Endothelial cell of umbilical vein (primary cell): ENCODE measurements at regions of chr2 and their contacts with region 1.

Region 1: GRCh38 chr2:11446733-11447248 is 19.2 kb downstream of the E2F6 start:
- DNase-seq: peak; percentile 71
- H3K4me3 ChIP-seq: no peak overlapping the region
- H3K27ac ChIP-seq: no peak overlapping the region
- H3K4me1 ChIP-seq: no peaks in the 10 kb centered on the region
- H3K27me3 ChIP-seq: no peaks in the 10 kb centered on the region
- CTCF ChIP-seq: peak; percentile 72 to 75
- POLR2A ChIP-seq: no peak

Region 2: DNA sequence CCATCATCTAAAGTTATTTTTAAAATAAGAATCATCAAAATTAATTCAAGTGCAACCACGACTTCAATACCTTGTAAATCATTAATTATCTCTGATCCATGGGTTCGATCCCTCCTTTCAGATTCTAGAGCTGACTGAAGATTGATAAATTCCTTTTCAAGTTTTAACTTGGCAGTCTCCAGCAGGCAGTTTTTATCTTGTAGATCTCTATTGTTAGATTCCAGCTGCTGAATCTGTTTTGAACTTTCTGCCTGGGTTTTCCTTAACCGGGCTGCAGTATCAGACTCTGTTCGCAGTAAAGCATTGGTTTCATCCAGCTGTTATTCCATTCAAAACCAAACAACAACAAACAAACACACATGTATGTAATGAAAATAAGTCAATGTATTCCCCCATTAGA is 232.0 kb before region 1 on chr2:
- CTCF ChIA-PET with region 1: interaction called, 10 read pairs
- POLR2A ChIA-PET with region 1: no interaction called
- dilution Hi-C with region 1: no loop called
- intact Hi-C with region 1: no loop called
- DNase-seq: no peak
- H3K4me3 ChIP-seq: no peak overlapping the region
- H3K27ac ChIP-seq: no peak overlapping the region
- H3K4me1 ChIP-seq: no peaks in the 10 kb centered on the region
- H3K27me3 ChIP-seq: no peaks in the 10 kb centered on the region
- CTCF ChIP-seq: no peak
- POLR2A ChIP-seq: no peak

Region 3: DNA sequence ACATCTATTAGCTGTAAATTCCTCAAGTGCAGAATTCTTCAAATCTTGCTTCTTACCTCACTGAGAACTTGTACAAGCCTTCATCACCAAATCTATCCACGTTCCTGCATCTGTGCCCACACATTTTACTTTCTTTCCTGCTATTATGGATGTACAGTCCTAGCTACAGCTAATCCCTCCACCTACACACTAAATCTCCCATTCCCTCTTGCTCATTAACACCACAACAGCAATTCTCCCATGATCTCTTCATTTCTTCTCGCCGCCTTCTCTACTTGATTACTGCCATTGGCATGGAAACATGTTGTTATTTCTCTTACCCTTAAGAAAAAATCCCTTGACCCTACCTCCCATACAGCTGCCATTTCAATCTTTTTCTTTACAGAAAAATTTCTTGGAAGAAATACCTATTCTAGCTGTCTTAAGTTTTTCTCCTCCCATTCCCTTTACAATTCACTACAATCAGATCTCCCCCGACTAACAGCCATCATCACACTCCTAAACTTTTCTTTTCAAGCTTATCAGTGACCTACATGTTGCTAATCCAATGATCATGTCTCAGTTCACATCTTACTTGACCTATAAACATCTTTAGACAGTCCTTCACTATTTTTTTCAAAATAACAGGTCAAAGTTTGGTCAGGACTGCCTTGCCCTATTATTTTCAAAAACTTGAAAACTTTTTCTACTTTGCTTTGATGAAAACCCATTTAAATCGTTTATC is 143.3 kb before region 1 on chr2:
- CTCF ChIA-PET with region 1: no interaction called
- POLR2A ChIA-PET with region 1: no interaction called
- dilution Hi-C with region 1: no loop called
- intact Hi-C with region 1: no loop called
- DNase-seq: no peak
- H3K4me3 ChIP-seq: no peak overlapping the region
- H3K27ac ChIP-seq: no peak overlapping the region
- H3K4me1 ChIP-seq: no peaks in the 10 kb centered on the region
- H3K27me3 ChIP-seq: no peaks in the 10 kb centered on the region
- CTCF ChIP-seq: no peak
- POLR2A ChIP-seq: no peak

Region 4: GRCh38 chr2:11457935-11458334 is 11.1 kb after region 1 on chr2:
- CTCF ChIA-PET with region 1: interaction called, 16 read pairs
- POLR2A ChIA-PET with region 1: no interaction called
- dilution Hi-C with region 1: no loop called
- intact Hi-C with region 1: no loop called
- DNase-seq: no peak
- H3K4me3 ChIP-seq: no peak overlapping the region
- H3K27ac ChIP-seq: no peak overlapping the region
- H3K4me1 ChIP-seq: peaks cover 3% of the 10 kb centered on the region
- H3K27me3 ChIP-seq: no peaks in the 10 kb centered on the region
- CTCF ChIP-seq: no peak
- POLR2A ChIP-seq: no peak

Region 5: DNA sequence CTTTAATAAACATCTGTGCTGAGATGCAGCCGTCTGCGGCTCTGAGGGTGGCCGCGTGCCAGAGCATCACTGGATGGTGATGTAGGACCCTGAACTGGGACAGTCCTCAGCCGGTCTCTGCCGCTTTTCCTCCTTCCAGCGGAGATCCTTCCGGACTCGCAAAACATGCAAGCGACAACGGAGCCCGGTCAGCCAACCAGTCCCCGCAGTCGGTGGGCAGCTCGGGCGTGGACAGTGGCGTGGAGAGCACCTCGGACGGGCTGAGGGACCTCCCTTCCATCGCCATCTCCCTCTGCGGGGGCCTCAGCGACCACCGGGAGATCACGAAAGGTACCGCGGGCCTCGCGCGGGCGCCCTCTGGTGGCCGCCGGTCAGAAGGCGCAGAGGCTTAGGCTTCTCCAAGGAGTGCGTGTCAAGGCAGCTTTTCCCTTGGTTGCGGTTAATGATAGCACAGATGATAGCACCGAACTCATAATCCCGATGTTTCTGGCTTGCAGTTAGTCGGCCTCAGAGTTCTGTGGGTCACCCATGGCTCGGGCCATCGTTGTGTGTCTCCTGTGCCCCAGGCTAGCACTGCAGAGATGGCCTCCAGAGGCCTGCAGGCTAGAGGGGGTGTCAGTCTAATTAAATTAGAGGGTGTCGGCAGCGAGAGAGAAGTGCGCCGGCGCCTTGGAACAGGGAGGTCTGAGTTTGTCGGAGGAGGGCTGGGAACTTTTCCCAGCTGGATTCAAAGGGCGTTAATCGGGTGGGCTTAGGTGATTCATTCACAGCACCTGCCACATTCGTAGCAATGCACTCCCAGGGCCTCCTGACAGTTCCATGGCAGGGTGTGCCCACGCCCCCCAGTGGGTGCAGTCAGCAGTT is 338.2 kb after region 1 on chr2:
- CTCF ChIA-PET with region 1: no interaction called
- POLR2A ChIA-PET with region 1: no interaction called
- dilution Hi-C with region 1: no loop called
- intact Hi-C with region 1: no loop called
- DNase-seq: peak; percentile 49
- H3K4me3 ChIP-seq: peak overlapping the region in 1 of 3 experiments; percentile 26
- H3K27ac ChIP-seq: no peak overlapping the region
- H3K4me1 ChIP-seq: no peaks in the 10 kb centered on the region
- H3K27me3 ChIP-seq: no peaks in the 10 kb centered on the region
- CTCF ChIP-seq: peak; percentile 94 to 99
- POLR2A ChIP-seq: no peak